ENCODE measurements at regions of chr3 and their contacts with region 1.

Region 1: DNA sequence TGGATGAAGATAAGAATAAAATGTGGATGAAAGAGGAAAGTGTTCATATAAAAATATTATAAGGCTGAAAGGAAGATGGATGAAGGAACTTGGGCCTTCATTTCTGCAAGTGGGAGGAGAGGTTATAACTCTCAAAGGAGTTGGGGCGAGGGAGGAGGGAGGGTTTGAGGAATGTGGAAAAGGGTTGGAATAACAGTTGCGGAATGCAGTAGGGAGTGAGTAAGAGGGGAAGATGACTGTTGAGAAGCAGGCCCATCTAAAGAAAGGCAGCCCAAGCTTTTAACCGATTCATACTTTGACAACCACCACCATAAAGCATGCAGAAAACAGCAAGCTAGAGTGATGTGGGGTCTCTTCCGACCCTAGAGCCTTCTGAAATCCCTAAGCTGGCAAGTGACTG is 8.3 kb upstream of the TM4SF4 start:
- DNase-seq: peak in 3 of 7 donors; percentile 6 to 27 (median 27)
- H3K4me3 ChIP-seq: no peak overlapping the region
- H3K27ac ChIP-seq: peak overlapping the region in 1 of 5 donors; percentile 78
- H3K4me1 ChIP-seq: peaks cover 4 to 10% of the 10 kb centered on the region in 2 donors
- H3K27me3 ChIP-seq: no peaks in the 10 kb centered on the region
- CTCF ChIP-seq: no peak
- POLR2A ChIP-seq: no peak

Region 2: GRCh38 chr3:149234671-149235245 is 231.4 kb before region 1 on chr3:
- intact Hi-C with region 1: no loop called
- DNase-seq: no peak
- H3K4me3 ChIP-seq: no peak overlapping the region
- H3K27ac ChIP-seq: no peak overlapping the region
- H3K4me1 ChIP-seq: no peaks in the 10 kb centered on the region
- H3K27me3 ChIP-seq: no peaks in the 10 kb centered on the region
- CTCF ChIP-seq: no peak
- POLR2A ChIP-seq: no peak

Region 3: GRCh38 chr3:149401215-149401925 is 64.8 kb before region 1 on chr3:
- intact Hi-C with region 1: loop called in 1 of 2 experiments (anchors 10 kb)
- DNase-seq: no peak
- H3K4me3 ChIP-seq: no peak overlapping the region
- H3K27ac ChIP-seq: no peak overlapping the region
- H3K4me1 ChIP-seq: no peaks in the 10 kb centered on the region
- H3K27me3 ChIP-seq: no peaks in the 10 kb centered on the region
- CTCF ChIP-seq: no peak
- POLR2A ChIP-seq: no peak

Measured in adrenal gland (tissue), 19 donors.